Calu3 (cell line): ENCODE measurements at regions of chr1 and their contacts with region 1.

Region 1: GRCh38 chr1:202105539-202106276 is 17.0 kb upstream of the GPR37L1 start:
- DNase-seq: peak; percentile 96
- H3K4me3 Mint-ChIP-seq: peak overlapping the region; percentile 31
- H3K27ac Mint-ChIP-seq: peak overlapping the region; percentile 87
- H3K4me1 Mint-ChIP-seq: peaks cover 71% of the 10 kb centered on the region
- H3K27me3 Mint-ChIP-seq: no peaks in the 10 kb centered on the region
- CTCF ChIP-seq: no peak

Region 2: GRCh38 chr1:201376464-201377374 is 729.0 kb before region 1 on chr1:
- CTCF ChIA-PET with region 1: no interaction called
- intact Hi-C with region 1: no loop called
- DNase-seq: peak; percentile 64
- H3K4me3 Mint-ChIP-seq: no peak overlapping the region
- H3K27ac Mint-ChIP-seq: no peak overlapping the region
- H3K4me1 Mint-ChIP-seq: peaks cover 9% of the 10 kb centered on the region
- H3K27me3 Mint-ChIP-seq: peaks cover 78% of the 10 kb centered on the region
- CTCF ChIP-seq: peak; percentile 65

Region 3: DNA sequence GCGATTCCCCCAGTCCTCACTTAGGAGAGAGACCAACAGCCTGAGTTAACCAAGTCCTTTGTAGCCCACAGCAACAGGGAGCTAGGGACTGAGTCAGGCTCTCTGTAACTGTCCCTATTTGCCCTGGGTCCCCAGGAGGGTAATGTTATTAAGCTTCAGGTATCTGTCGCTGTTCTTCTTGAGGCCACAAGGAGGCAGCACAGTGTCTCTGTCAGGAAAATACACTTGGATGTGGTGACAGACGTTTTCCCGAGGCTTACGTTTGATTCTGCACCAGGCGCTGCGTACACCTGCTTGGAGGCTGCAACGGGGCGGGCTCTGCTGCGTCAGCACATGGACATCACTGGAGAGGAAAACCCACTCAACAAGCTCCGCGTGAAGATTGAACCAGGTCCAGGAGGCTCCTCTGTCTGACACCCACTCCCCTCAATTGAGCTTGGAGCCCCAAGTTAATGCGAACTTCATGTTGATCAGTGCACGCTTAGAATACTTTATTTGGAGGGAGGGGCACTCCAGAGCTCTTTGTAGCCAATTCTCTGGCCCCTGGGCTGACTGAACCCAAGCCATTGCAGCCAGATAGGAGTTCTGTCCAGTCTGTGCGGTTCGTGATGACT is 106.0 kb before region 1 on chr1:
- CTCF ChIA-PET with region 1: interaction called, 15 read pairs
- intact Hi-C with region 1: no loop called
- DNase-seq: peak; percentile 65
- H3K4me3 Mint-ChIP-seq: no peak overlapping the region
- H3K27ac Mint-ChIP-seq: no peak overlapping the region
- H3K4me1 Mint-ChIP-seq: no peaks in the 10 kb centered on the region
- H3K27me3 Mint-ChIP-seq: no peaks in the 10 kb centered on the region
- CTCF ChIP-seq: peak; percentile 85

Region 4: DNA sequence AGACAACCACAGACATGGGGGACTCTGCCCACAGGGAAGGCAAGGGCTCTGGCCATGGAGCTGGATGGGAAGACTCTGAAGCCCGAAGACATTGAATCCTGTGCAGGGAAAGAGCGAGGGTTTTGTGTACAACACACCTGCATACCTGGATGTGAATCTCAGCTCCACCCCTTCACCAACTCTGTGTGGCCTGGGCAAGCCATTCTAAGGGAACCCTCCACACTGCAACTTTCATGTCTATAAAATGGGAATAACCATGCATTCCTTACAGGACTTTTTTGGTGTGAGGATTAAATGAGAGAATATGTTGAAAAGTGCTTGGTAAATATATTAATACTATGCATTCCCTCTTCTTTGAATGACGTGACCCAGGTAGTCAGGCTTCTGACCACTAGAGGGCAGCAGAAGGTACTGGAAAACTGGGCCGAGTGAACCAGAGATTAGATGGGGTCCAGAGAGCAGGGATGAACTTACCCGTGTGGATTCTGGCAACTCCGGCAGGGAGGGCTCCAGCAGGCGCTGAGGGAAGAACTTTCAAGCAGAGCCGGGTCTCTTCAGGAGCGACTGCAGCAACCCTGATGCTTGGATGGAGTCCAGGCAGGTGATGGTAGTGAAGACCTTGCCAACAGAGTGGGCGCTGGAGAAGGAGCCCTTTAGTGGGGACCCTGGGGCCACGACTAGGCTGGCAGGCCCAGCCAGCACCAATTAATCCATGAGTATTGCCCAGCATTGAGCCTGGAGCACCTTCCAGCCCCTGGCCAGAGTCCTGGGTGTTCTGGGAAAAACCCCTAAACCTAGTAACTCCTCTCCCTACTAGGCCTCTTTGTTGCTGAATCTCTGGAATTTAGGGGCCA is 96.2 kb before region 1 on chr1:
- CTCF ChIA-PET with region 1: interaction called, 47 read pairs
- intact Hi-C with region 1: no loop called
- DNase-seq: peak; percentile 91
- H3K4me3 Mint-ChIP-seq: peak overlapping the region; percentile 92
- H3K27ac Mint-ChIP-seq: peak overlapping the region; percentile 89
- H3K4me1 Mint-ChIP-seq: peaks cover 48% of the 10 kb centered on the region
- H3K27me3 Mint-ChIP-seq: no peaks in the 10 kb centered on the region
- CTCF ChIP-seq: peak; percentile 85

Region 5: GRCh38 chr1:202018468-202019255 is 87.0 kb before region 1 on chr1:
- CTCF ChIA-PET with region 1: interaction called, 8 read pairs
- intact Hi-C with region 1: loop called (anchors 2 kb)
- DNase-seq: peak; percentile 95
- H3K4me3 Mint-ChIP-seq: peak overlapping the region; percentile 92
- H3K27ac Mint-ChIP-seq: peak overlapping the region; percentile 89
- H3K4me1 Mint-ChIP-seq: peaks cover 78% of the 10 kb centered on the region
- H3K27me3 Mint-ChIP-seq: no peaks in the 10 kb centered on the region
- CTCF ChIP-seq: no peak

Region 6: GRCh38 chr1:202034683-202035462 is 70.8 kb before region 1 on chr1:
- CTCF ChIA-PET with region 1: interaction called, 11 read pairs
- intact Hi-C with region 1: no loop called
- DNase-seq: peak; percentile 99
- H3K4me3 Mint-ChIP-seq: peak overlapping the region; percentile 46
- H3K27ac Mint-ChIP-seq: peak overlapping the region; percentile 97
- H3K4me1 Mint-ChIP-seq: peaks cover 75% of the 10 kb centered on the region
- H3K27me3 Mint-ChIP-seq: no peaks in the 10 kb centered on the region
- CTCF ChIP-seq: no peak

Region 7: GRCh38 chr1:202085682-202086404 is 19.9 kb before region 1 on chr1:
- CTCF ChIA-PET with region 1: interaction called, 26 read pairs
- intact Hi-C with region 1: loop called (anchors 1 kb)
- DNase-seq: peak; percentile 73
- H3K4me3 Mint-ChIP-seq: peak overlapping the region; percentile 67
- H3K27ac Mint-ChIP-seq: peak overlapping the region; percentile 99
- H3K4me1 Mint-ChIP-seq: peaks cover 61% of the 10 kb centered on the region
- H3K27me3 Mint-ChIP-seq: no peaks in the 10 kb centered on the region
- CTCF ChIP-seq: no peak